Activated CD4-positive, alpha-beta T cell treated with anti-CD3 and anti-CD28 coated beads for 36 hours (primary cell): ENCODE measurements at regions of chr1 and their contacts with region 1.

Region 1: DNA sequence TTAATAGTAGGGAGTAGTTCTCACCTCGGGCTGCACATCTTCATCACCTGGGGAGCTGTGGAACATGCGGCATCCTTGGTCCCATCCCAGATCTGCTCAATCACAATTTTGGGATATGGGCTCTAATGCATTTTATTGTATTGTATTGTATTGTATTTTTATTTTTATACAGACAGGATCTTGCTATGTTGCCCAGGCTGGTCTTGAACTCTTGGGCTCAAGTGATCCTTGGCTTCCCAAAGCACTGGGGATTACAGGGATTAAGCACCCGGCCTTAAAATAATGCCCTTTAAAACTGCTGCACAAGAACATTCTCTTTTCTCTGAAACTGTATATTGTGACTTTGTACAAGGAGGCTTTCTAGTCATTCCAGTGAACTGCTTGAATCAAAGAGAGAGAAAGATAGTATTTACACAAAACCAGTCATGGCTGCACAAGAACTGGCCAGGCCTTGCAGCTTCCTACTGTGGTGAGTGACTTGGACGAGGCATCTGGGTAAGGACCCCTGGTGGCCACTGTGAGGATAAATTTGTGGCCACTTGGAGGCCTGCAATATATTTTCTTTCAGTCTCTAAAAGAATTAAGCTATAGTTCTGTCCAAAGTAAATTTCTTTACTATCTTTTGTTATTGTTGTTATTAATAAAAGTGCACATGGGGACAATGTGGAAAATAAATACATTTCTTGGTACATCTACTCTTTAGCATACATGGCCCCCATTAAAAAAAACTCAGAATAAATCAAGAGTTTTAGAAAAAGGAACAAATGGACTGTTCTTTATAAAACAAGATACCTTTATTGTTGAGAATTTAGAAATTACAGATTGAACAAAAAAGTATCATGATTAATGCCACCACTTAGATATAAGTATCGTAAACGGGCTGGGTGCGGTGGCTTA is 48.0 kb downstream of the TBCE start:
- DNase-seq: peak; percentile 78
- ATAC-seq: peak; percentile 84
- H3K4me3 Mint-ChIP-seq: no peak overlapping the region
- H3K27ac Mint-ChIP-seq: no peak overlapping the region
- H3K4me1 Mint-ChIP-seq: no peaks in the 10 kb centered on the region
- H3K27me3 Mint-ChIP-seq: no peaks in the 10 kb centered on the region

Region 2: GRCh38 chr1:235105051-235106043 is 309.9 kb before region 1 on chr1:
- CTCF ChIA-PET with region 1: interaction called, 57 read pairs
- POLR2A ChIA-PET with region 1: no interaction called
- intact Hi-C with region 1: loop called (anchors 1 kb)
- DNase-seq: peak; percentile 26
- ATAC-seq: peak; percentile 59
- H3K4me3 Mint-ChIP-seq: peak overlapping the region; percentile 60
- H3K27ac Mint-ChIP-seq: peak overlapping the region; percentile 56
- H3K4me1 Mint-ChIP-seq: peaks cover 44% of the 10 kb centered on the region
- H3K27me3 Mint-ChIP-seq: peaks cover 4% of the 10 kb centered on the region

Region 3: GRCh38 chr1:235239851-235240250 is 175.4 kb before region 1 on chr1:
- CTCF ChIA-PET with region 1: interaction called, 25 read pairs
- POLR2A ChIA-PET with region 1: no interaction called
- intact Hi-C with region 1: no loop called
- DNase-seq: no peak
- ATAC-seq: no peak
- H3K4me3 Mint-ChIP-seq: no peak overlapping the region
- H3K27ac Mint-ChIP-seq: no peak overlapping the region
- H3K4me1 Mint-ChIP-seq: peaks cover 25% of the 10 kb centered on the region
- H3K27me3 Mint-ChIP-seq: no peaks in the 10 kb centered on the region

Region 4: GRCh38 chr1:235259133-235259778 is 156.0 kb before region 1 on chr1:
- CTCF ChIA-PET with region 1: interaction called, 41 read pairs
- POLR2A ChIA-PET with region 1: no interaction called
- intact Hi-C with region 1: no loop called
- DNase-seq: no peak
- ATAC-seq: no peak
- H3K4me3 Mint-ChIP-seq: no peak overlapping the region
- H3K27ac Mint-ChIP-seq: peak overlapping the region; percentile 37
- H3K4me1 Mint-ChIP-seq: peaks cover 48% of the 10 kb centered on the region
- H3K27me3 Mint-ChIP-seq: no peaks in the 10 kb centered on the region

Region 5: DNA sequence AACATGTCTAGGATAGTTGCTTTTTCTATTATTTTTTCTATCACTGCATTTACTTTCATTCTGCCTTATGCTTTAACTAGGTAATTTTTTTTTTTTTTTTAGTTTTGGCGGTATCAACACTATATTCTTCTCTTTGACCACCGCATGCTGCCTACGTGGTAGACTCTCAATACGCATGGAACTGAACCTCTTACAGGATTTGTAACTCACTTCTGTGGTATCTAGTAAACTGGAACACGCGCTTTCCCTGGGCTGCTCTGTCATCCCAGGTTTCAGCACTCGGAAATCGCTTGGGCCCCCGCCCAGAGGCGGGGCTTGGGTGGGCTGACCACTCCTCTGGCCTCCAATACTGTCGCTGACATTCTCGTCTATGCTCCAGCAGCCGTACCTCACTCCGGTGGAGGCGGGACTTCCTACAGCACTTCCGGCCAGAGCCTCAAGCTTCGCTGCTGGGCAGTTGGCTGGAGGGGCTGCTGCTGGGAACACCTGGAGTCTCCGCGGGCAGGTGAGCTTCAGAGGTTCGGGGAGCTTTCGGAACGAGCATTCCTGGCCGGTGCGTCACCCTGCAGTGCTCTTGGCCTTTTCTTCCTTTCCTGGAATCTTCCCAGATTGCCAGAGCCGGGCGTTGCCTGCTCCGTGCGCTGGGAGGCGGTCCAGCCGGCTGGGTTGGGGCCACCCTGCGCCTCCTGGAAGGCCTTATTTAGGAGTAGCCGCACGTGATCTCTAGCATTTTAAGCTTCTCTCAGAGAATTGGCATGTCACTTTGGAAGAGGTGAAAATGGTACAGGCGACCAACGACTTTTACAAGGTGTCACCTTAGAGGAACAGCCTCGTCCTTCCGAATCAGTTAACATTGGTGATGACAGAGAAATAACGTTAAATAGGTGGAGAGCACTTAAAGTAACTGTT is 48.0 kb before region 1 on chr1 and contains the start of gene TBCE:
- CTCF ChIA-PET with region 1: interaction called, 4 read pairs
- POLR2A ChIA-PET with region 1: interaction called, 3 read pairs
- intact Hi-C with region 1: loop called in 1 of 2 experiments (anchors 5 kb)
- DNase-seq: peak; percentile 92
- ATAC-seq: peak; percentile 98
- H3K4me3 Mint-ChIP-seq: peak within 1 kb of the TSS; percentile 98
- H3K27ac Mint-ChIP-seq: peak within 1 kb of the TSS; percentile 93
- H3K4me1 Mint-ChIP-seq: peaks cover 22% of the 10 kb centered on the region
- H3K27me3 Mint-ChIP-seq: no peaks in the 10 kb centered on the region
- total RNA-seq, gene TBCE: 22.3 to 26.1 TPM

Region 6: GRCh38 chr1:235429143-235429542 is 13.9 kb after region 1 on chr1:
- CTCF ChIA-PET with region 1: interaction called, 15 read pairs
- POLR2A ChIA-PET with region 1: no interaction called
- intact Hi-C with region 1: no loop called
- DNase-seq: no peak
- ATAC-seq: no peak
- H3K4me3 Mint-ChIP-seq: no peak overlapping the region
- H3K27ac Mint-ChIP-seq: no peak overlapping the region
- H3K4me1 Mint-ChIP-seq: no peaks in the 10 kb centered on the region
- H3K27me3 Mint-ChIP-seq: no peaks in the 10 kb centered on the region